Activated CD8-positive, alpha-beta T cell treated with anti-CD3 and anti-CD28 coated beads, Interleukin-2, amount 10 ng/mL, durations not matched to agents 7 days and 5 days (primary cell): ENCODE measurements at regions of chr9 and their contacts with region 1.

Region 1: GRCh38 chr9:133144137-133144903 is 19.4 kb downstream of the GBGT1 start:
- DNase-seq: peak; percentile 97
- ATAC-seq: peak; percentile 69
- H3K4me3 Mint-ChIP-seq: peak overlapping the region; percentile 69
- H3K27ac Mint-ChIP-seq: peak overlapping the region; percentile 89
- H3K4me1 Mint-ChIP-seq: peaks cover 80% of the 10 kb centered on the region
- H3K27me3 Mint-ChIP-seq: no peaks in the 10 kb centered on the region

Region 2: GRCh38 chr9:133030317-133031129 is 113.8 kb before region 1 on chr9 and contains the start of gene GTF3C5:
- CTCF ChIA-PET with region 1: interaction called, 97 read pairs
- POLR2A ChIA-PET with region 1: interaction called, 18 read pairs
- DNase-seq: peak; percentile 96
- ATAC-seq: peak; percentile 98
- H3K4me3 Mint-ChIP-seq: peak within 1 kb of the TSS; percentile 93
- H3K27ac Mint-ChIP-seq: peak within 1 kb of the TSS; percentile 93
- H3K4me1 Mint-ChIP-seq: peaks cover 34% of the 10 kb centered on the region
- H3K27me3 Mint-ChIP-seq: no peaks in the 10 kb centered on the region
- total RNA-seq, gene GTF3C5: 89.3 to 95.7 TPM

Region 3: DNA sequence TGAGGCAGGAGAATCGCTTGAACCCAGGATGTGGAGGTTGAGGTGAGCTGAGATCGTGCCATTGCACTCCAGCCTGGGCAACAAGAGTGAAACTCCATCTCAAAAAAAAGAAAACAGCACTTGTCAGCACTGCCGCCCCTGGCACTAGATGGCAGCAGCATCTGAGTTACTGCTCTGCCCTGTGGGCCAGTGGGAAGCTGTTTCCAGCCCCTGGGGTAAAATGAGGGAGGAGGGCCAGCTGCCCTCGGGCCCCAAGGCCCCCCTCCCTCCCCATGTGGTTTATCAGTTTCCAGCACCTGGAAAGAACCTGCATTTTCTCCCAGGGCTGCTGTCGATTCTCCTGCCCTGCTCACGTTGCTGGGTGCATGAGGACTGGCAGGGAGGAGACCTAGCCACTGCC is 95.8 kb before region 1 on chr9:
- CTCF ChIA-PET with region 1: interaction called, 52 read pairs
- POLR2A ChIA-PET with region 1: no interaction called
- DNase-seq: peak; percentile 54
- ATAC-seq: peak; percentile 84
- H3K4me3 Mint-ChIP-seq: no peak overlapping the region
- H3K27ac Mint-ChIP-seq: no peak overlapping the region
- H3K4me1 Mint-ChIP-seq: peaks cover 12% of the 10 kb centered on the region
- H3K27me3 Mint-ChIP-seq: no peaks in the 10 kb centered on the region

Region 4: GRCh38 chr9:133094842-133095393 is 49.4 kb before region 1 on chr9:
- CTCF ChIA-PET with region 1: interaction called, 421 read pairs
- POLR2A ChIA-PET with region 1: interaction called, 5 read pairs
- DNase-seq: no peak
- ATAC-seq: no peak
- H3K4me3 Mint-ChIP-seq: no peak overlapping the region
- H3K27ac Mint-ChIP-seq: no peak overlapping the region
- H3K4me1 Mint-ChIP-seq: peaks cover 2% of the 10 kb centered on the region
- H3K27me3 Mint-ChIP-seq: no peaks in the 10 kb centered on the region

Region 5: DNA sequence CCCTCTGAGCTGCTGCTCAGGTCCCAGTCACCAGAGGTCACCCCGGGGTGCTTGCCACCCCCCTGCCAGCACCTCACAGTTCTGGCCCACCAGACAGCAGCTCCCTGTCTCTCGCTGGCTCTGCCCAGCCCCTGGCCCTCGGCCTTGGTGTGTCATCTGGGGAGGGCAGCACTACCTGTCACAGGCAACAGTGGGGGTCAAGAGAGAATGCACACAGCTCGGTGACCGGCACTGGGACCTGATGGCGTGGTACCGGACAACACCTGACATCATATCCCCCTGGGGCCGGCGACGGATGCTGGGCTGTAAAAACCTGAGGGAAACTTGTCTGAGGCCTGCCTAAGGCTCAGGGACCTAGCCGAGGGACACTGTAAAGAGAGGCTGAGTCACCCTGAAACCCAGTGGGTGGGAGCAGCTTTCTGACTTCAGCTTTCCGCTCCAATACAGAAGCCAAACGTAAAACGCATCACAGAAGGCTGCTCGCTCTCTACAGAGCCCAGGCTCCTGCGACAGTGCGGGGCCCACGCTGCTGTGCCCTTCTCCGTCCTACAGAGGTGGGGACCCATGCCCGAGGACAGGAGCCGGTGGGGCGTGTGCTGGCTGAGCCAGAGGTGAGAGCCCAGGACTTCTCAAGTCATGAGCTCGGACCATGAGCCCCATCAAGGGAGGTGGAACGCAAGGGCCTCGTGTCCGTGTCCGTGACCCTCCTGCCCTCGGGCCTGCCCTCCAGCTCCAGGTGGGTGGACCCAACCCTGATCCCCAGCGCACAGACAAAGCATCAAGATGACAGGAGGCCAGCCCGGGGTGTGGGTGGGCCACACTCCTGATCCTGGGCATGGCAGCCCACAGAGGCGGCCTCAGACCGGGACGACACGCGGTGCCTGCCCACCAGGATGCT is 28.6 kb before region 1 on chr9:
- CTCF ChIA-PET with region 1: interaction called, 421 read pairs
- POLR2A ChIA-PET with region 1: interaction called, 14 read pairs
- DNase-seq: peak; percentile 66
- ATAC-seq: peak; percentile 62
- H3K4me3 Mint-ChIP-seq: no peak overlapping the region
- H3K27ac Mint-ChIP-seq: peak overlapping the region; percentile 83
- H3K4me1 Mint-ChIP-seq: peaks cover 79% of the 10 kb centered on the region
- H3K27me3 Mint-ChIP-seq: no peaks in the 10 kb centered on the region

Region 6: GRCh38 chr9:133133681-133134418 is 10.5 kb before region 1 on chr9:
- CTCF ChIA-PET with region 1: interaction called, 288 read pairs
- POLR2A ChIA-PET with region 1: interaction called, 64 read pairs
- DNase-seq: peak; percentile 95
- ATAC-seq: peak; percentile 81
- H3K4me3 Mint-ChIP-seq: peak overlapping the region; percentile 40
- H3K27ac Mint-ChIP-seq: peak overlapping the region; percentile 99
- H3K4me1 Mint-ChIP-seq: peaks cover 90% of the 10 kb centered on the region
- H3K27me3 Mint-ChIP-seq: no peaks in the 10 kb centered on the region